HCT116 (cell line): ENCODE measurements at regions of chr6 and their contacts with region 1.

Region 1: DNA sequence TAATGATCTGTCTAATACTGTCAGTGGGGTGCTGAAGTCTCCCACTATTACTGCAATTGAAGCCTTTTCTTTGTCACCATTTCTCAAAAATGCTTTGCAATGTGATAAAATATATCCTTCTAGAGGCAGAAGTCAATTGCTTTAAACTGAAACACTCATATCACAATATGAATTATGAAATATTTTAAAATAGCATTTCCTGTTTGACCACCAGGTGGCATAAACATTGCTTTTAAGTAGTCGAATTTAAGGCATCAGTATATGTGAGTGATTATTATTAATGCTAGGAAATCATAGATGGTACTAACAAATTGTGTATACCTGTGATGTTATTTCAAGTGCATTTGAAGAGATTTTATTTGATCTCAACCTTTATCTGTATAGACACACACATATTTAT is 87.5 kb downstream of the MEI4 start:
- DNase-seq: peak; percentile 19
- ATAC-seq: no peak
- H3K4me3 ChIP-seq: no peak overlapping the region
- H3K27ac ChIP-seq: no peak overlapping the region
- H3K4me1 ChIP-seq: no peaks in the 10 kb centered on the region
- H3K27me3 ChIP-seq: no peaks in the 10 kb centered on the region
- CTCF ChIP-seq: peak in 2 of 3 experiments; percentile 45 to 67; a peak in 3 of 6 replicates
- POLR2A ChIP-seq: no peak
- RAD21 ChIP-seq: peak; percentile 54

Region 2: DNA sequence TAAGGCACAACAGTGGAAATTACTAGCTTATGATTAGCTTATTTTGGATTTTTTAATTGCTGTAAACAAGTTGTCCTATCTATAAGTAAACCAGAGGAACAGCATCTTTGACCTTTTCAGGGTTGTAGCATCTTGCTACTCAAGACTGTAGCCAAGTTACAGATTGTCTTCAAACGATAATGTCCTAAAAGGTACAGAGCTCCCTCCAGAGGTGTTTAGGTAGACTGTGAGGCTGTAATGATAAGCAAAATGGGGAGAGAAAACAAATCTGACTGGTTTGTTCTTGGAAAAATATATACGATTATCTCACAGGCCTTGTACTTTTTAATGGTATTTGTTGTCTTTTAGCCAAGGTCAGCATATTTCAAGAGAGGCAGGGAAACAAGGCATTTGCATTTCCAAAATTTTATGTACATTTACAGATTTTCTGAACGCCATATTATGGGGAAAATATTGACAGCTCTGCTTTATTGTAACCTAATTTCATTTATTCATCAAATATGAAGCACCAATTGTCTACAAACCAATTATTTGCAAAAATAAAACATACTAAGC is 185.9 kb after region 1 on chr6:
- CTCF ChIA-PET with region 1: interaction called, 7 read pairs
- POLR2A ChIA-PET with region 1: no interaction called
- RAD21 ChIA-PET with region 1: no interaction called
- intact Hi-C with region 1: loop called (anchors 10 kb)
- DNase-seq: peak; percentile 37
- ATAC-seq: peak; percentile 79
- H3K4me3 ChIP-seq: no peak overlapping the region
- H3K27ac ChIP-seq: no peak overlapping the region
- H3K4me1 ChIP-seq: no peaks in the 10 kb centered on the region
- H3K27me3 ChIP-seq: no peaks in the 10 kb centered on the region
- CTCF ChIP-seq: peak; percentile 54 to 57 (median 55); a peak in 4 of 6 replicates
- POLR2A ChIP-seq: no peak
- RAD21 ChIP-seq: peak; percentile 69

Region 3: GRCh38 chr6:78511009-78511408 is 770.6 kb after region 1 on chr6:
- CTCF ChIA-PET with region 1: no interaction called
- POLR2A ChIA-PET with region 1: no interaction called
- RAD21 ChIA-PET with region 1: no interaction called
- intact Hi-C with region 1: loop called (anchors 10 kb)
- DNase-seq: no peak
- ATAC-seq: no peak
- H3K4me3 ChIP-seq: no peak overlapping the region
- H3K27ac ChIP-seq: no peak overlapping the region
- H3K4me1 ChIP-seq: no peaks in the 10 kb centered on the region
- H3K27me3 ChIP-seq: no peaks in the 10 kb centered on the region
- CTCF ChIP-seq: no peak
- POLR2A ChIP-seq: no peak
- RAD21 ChIP-seq: no peak

Region 4: GRCh38 chr6:78810146-78810545 is 1069.8 kb after region 1 on chr6:
- CTCF ChIA-PET with region 1: no interaction called
- POLR2A ChIA-PET with region 1: no interaction called
- RAD21 ChIA-PET with region 1: no interaction called
- intact Hi-C with region 1: loop called (anchors 10 kb)
- DNase-seq: peak; percentile 31
- ATAC-seq: peak; percentile 90
- H3K4me3 ChIP-seq: no peak overlapping the region
- H3K27ac ChIP-seq: no peak overlapping the region
- H3K4me1 ChIP-seq: no peaks in the 10 kb centered on the region
- H3K27me3 ChIP-seq: no peaks in the 10 kb centered on the region
- CTCF ChIP-seq: peak; percentile 47 to 67 (median 67); a peak in 5 of 6 replicates
- POLR2A ChIP-seq: no peak
- RAD21 ChIP-seq: peak; percentile 74